Gastrocnemius medialis (tissue), 4 donors: ENCODE measurements at regions of chr16 and their contacts with region 1.

Region 1: GRCh38 chr16:22206013-22206841 is at the start of gene EEF2K:
- DNase-seq: peak; percentile 93 to 97
- ATAC-seq: peak; percentile 70 to 82
- H3K4me3 ChIP-seq: peak within 1 kb of the TSS; percentile 78 to 90 (median 89)
- H3K27ac ChIP-seq: peak within 1 kb of the TSS; percentile 91 to 97 (median 96)
- H3K4me1 ChIP-seq: peaks cover 47 to 49% of the 10 kb centered on the region in 2 donors
- H3K27me3 ChIP-seq: no peaks in the 10 kb centered on the region
- CTCF ChIP-seq: peak; percentile 80 to 94 (median 91)
- POLR2A ChIP-seq: peak; percentile 82 to 85
- total RNA-seq, gene EEF2K: 18.7 to 39.9 (median 21.2) TPM

Region 2: GRCh38 chr16:22217889-22218730 is 11.9 kb after region 1 on chr16:
- in situ Hi-C with region 1: no loop called
- intact Hi-C with region 1: loop called (anchors 1 kb)
- DNase-seq: peak in 1 of 2 donors; percentile 57
- ATAC-seq: peak in 1 of 2 donors; percentile 14
- H3K4me3 ChIP-seq: no peak overlapping the region
- H3K27ac ChIP-seq: peak overlapping the region; percentile 90 to 95 (median 94)
- H3K4me1 ChIP-seq: peaks cover 61 to 64% of the 10 kb centered on the region in 2 donors
- H3K27me3 ChIP-seq: no peaks in the 10 kb centered on the region
- CTCF ChIP-seq: no peak
- POLR2A ChIP-seq: peak in 1 of 2 donors; percentile 10

Region 3: DNA sequence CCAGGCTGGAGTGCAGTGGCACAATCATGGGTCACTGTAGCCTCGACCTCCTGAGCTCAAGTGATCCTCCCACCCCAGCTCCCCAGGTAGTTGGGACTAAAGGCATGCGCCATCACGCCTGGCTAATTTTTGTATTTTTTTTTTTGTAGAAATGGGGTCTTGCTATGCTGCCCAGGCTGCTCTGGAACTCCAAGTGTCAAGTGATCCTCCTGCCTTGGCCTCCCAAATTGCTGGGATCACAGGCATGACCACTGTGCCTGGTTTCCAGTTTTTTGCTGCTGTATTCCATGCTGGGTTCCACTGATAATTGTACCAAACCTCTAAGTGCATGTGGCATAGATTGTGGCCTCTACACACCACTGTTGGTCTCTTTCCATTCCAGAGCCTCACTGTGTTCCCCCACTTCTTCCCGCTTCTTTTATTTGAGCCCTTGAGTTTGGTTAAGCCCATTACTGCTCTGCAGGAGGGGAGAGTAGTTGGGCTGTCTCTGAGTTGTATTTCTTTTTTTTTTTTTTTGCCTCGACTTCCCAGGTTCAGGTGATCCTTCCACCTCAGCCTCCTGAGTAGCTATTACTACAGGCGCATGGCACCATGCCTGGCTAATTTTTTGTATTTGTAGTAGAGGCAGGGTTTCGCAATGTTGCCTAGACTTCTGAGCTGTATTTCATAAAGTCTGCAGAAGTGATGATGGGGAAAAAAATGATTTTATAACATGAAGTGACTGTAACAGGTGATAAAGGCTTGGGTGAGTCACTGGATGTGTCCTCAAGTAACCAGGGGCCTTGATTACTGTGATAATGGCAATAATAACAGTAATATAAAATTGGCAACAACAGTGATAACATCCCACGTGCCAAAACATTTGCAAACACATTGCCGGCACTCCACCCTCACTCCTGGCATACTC is 29.9 kb after region 1 on chr16:
- in situ Hi-C with region 1: no loop called
- intact Hi-C with region 1: loop called (anchors 2 kb)
- DNase-seq: peak; percentile 35 to 50
- ATAC-seq: peak; percentile 72 to 82
- H3K4me3 ChIP-seq: no peak overlapping the region
- H3K27ac ChIP-seq: peak overlapping the region in 2 of 4 donors; percentile 8 to 33
- H3K4me1 ChIP-seq: peaks cover 27 to 32% of the 10 kb centered on the region in 2 donors
- H3K27me3 ChIP-seq: no peaks in the 10 kb centered on the region
- CTCF ChIP-seq: no peak
- POLR2A ChIP-seq: no peak

Region 4: GRCh38 chr16:22291860-22292692 is 85.8 kb after region 1 on chr16:
- in situ Hi-C with region 1: loop called in 1 of 4 experiments (anchors 5 kb)
- intact Hi-C with region 1: loop called (anchors 1 kb)
- DNase-seq: no peak
- ATAC-seq: no peak
- H3K4me3 ChIP-seq: no peak overlapping the region
- H3K27ac ChIP-seq: no peak overlapping the region
- H3K4me1 ChIP-seq: no peaks in the 10 kb centered on the region
- H3K27me3 ChIP-seq: no peaks in the 10 kb centered on the region
- CTCF ChIP-seq: no peak
- POLR2A ChIP-seq: no peak

Region 5: GRCh38 chr16:22297114-22297878 is 91.1 kb after region 1 on chr16 and contains the start of gene POLR3E:
- in situ Hi-C with region 1: loop called in 1 of 4 experiments (anchors 5 kb)
- intact Hi-C with region 1: loop called (anchors 1 kb)
- DNase-seq: peak; percentile 98 to 99
- ATAC-seq: peak; percentile 77 to 79
- H3K4me3 ChIP-seq: peak within 1 kb of the TSS; percentile 87 to 97 (median 94)
- H3K27ac ChIP-seq: peak within 1 kb of the TSS; percentile 97 to 100 (median 98)
- H3K4me1 ChIP-seq: peaks cover 12 to 18% of the 10 kb centered on the region in 2 donors
- H3K27me3 ChIP-seq: no peaks in the 10 kb centered on the region
- CTCF ChIP-seq: peak; percentile 93 to 98 (median 98)
- POLR2A ChIP-seq: peak; percentile 88 to 90
- total RNA-seq, gene POLR3E: 105 to 182 (median 116) TPM

Region 6: DNA sequence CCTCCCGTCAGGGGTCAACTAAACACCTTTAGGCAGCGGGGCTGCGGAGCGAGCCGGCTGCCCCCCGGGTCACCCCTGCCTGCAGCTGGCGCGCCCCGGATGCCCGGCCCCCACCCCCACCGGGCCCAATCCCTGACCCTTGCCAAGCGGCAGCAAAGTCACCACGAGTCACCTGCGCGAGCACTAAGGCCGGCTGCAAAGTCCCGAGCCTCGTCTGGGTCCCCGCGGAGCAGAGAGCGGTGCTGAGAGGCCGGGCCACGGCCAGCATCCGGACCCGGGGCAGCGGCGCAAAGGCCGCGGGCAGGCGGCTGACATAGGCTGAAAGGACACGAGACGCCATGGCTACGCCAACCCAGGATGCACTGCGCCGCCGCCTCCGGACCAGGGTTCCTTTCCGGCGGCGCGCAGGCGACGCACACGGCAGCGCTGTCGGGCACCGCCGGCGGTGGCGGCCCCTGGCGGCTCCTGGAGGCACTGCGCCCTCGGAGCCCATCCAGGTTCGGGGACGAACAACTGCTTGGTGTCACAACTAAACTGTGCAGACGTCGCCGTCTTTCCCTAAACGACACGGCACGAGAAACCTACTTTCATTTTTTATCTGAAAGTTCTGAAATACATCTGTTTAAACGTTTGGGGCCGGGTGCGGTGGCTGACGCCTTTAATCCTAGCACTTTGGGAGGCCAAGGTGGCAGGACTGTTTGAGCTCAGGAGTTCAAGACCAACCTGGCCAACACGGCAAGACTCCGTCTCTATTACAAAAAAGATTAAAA is 1389.9 kb after region 1 on chr16 and contains the start of gene NDUFAB1:
- in situ Hi-C with region 1: no loop called
- intact Hi-C with region 1: loop called (anchors 10 kb)
- DNase-seq: peak; percentile 82 to 89
- ATAC-seq: peak; percentile 83 to 87
- H3K4me3 ChIP-seq: peak within 1 kb of the TSS; percentile 88 to 100 (median 97)
- H3K27ac ChIP-seq: peak within 1 kb of the TSS; percentile 94 to 99 (median 96)
- H3K4me1 ChIP-seq: peaks cover 26 to 35% of the 10 kb centered on the region in 2 donors
- H3K27me3 ChIP-seq: no peaks in the 10 kb centered on the region
- CTCF ChIP-seq: peak; percentile 93 to 100 (median 100)
- POLR2A ChIP-seq: peak; percentile 8 to 42
- total RNA-seq, gene NDUFAB1: 166 to 400 (median 323) TPM